ENCODE measurements at regions of chr17 and their contacts with region 1.

Region 1: GRCh38 chr17:49393491-49394255 is 21.0 kb downstream of the PHB1 start:
- DNase-seq: no peak
- H3K4me3 ChIP-seq: no peak overlapping the region
- H3K27ac ChIP-seq: no peak overlapping the region
- H3K4me1 ChIP-seq: peaks cover 10% of the 10 kb centered on the region
- H3K27me3 ChIP-seq: no peaks in the 10 kb centered on the region
- CTCF ChIP-seq: no peak

Region 2: DNA sequence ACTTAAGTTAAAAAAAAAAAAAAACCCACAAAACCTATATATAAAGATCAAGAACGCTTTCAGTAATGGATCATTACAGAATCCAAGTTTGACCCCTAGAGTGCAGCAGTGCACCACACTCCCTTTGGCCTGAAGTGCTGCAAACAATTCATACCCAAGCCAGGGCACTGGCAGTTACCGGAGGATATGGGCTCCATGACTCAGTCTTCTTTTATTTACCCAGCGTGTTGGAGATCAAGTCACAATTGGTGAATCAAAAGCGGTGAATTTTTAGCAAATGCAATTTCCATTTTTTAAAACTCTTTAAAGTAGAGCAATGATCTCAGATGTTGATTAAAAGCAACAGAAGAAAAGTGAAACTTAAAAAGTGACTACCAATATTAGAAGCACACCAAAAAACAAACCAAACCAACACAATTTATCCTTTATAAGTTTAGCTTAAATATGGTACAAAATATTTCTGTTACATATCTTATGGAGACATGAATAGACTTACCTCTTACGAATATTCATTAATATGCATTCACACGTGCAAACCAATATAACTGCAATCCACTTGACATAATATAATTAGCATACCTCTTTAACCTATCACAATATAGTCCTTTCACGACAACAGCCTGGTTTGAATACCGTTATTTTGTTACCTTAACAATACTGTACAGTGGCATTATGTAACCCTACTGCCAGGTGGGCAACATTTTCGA is 78.0 kb before region 1 on chr17:
- intact Hi-C with region 1: loop called (anchors 2 kb)
- DNase-seq: peak; percentile 80
- H3K4me3 ChIP-seq: no peak overlapping the region
- H3K27ac ChIP-seq: no peak overlapping the region
- H3K4me1 ChIP-seq: peaks cover 6% of the 10 kb centered on the region
- H3K27me3 ChIP-seq: no peaks in the 10 kb centered on the region
- CTCF ChIP-seq: peak; percentile 65